ENCODE measurements at regions of chr6 and their contacts with region 1.

Region 1: GRCh38 chr6:53263917-53264316 is 84.8 kb downstream of the ELOVL5 start:
- DNase-seq: no peak
- ATAC-seq: no peak
- H3K4me3 Mint-ChIP-seq: no peak overlapping the region
- H3K27ac Mint-ChIP-seq: peak overlapping the region; percentile 67
- H3K4me1 Mint-ChIP-seq: peaks cover 57% of the 10 kb centered on the region
- H3K27me3 Mint-ChIP-seq: no peaks in the 10 kb centered on the region
- CTCF ChIP-seq: no peak

Region 2: GRCh38 chr6:52893803-52894649 is 369.9 kb before region 1 on chr6:
- CTCF ChIA-PET with region 1: no interaction called
- POLR2A ChIA-PET with region 1: no interaction called
- intact Hi-C with region 1: no loop called
- DNase-seq: no peak
- ATAC-seq: no peak
- H3K4me3 Mint-ChIP-seq: no peak overlapping the region
- H3K27ac Mint-ChIP-seq: no peak overlapping the region
- H3K4me1 Mint-ChIP-seq: no peaks in the 10 kb centered on the region
- H3K27me3 Mint-ChIP-seq: peaks cover 6% of the 10 kb centered on the region
- CTCF ChIP-seq: no peak

Region 3: DNA sequence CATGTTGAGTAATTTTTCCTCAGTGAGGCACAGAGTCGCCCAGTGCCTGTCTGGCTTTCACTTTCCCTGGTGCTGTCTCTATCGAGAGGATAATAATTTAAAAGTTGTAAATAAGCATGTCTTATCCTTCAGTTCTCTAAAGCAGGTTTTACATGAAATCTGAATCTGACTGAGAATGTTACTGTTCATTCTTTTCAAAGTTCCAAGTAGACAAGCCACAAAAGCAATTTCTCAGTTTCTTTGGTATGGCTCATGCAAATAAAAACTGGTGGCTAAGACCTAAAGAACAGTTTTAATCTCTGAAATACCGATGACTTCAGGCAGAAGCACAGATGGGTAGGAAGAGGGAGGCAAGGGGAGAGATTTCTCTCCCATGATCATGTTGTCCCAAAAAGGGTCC is 27.7 kb before region 1 on chr6:
- CTCF ChIA-PET with region 1: no interaction called
- POLR2A ChIA-PET with region 1: no interaction called
- intact Hi-C with region 1: no loop called
- DNase-seq: no peak
- ATAC-seq: no peak
- H3K4me3 Mint-ChIP-seq: peak overlapping the region; percentile 56
- H3K27ac Mint-ChIP-seq: peak overlapping the region; percentile 87
- H3K4me1 Mint-ChIP-seq: peaks cover 86% of the 10 kb centered on the region
- H3K27me3 Mint-ChIP-seq: no peaks in the 10 kb centered on the region
- CTCF ChIP-seq: no peak

Region 4: DNA sequence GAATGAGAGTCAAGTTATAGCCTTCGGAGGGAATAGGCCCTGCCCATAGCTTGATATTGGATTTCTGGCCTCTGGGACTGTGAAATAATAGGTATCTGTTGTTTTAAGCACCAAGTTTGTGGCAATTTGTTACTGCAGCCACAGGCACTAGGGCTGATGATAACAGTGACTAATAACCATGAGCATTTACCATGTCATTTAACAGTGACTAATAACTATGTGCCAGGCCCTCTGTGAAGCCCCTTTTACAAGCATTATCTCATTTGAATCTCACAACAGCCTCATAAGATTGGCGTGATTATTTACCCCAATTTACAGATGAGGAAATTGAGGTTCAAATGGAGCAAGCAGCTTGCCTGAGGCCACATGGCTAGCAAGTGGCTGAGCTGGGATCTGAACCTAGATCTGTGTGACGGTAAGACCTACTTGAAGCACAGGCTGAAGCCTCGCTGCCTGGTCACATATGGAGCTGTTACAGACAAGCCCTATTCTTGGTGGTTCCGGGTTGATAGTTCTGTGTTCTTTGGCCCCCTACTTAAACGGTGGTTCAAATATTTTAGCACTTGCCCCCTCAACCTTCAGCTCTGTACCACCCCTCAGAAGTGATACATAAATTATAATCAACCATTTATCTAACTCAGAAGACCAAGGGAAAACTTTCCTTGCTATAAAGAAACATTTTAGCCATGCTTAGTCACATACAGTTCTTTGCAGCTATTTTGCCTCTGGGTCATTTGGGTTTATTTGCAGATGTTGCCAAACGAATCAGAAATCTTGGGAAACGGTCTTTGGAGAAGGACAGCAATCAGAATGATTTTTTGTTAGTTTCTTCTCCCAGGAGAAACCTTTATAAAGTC is 13.5 kb before region 1 on chr6:
- CTCF ChIA-PET with region 1: interaction called, 4 read pairs
- POLR2A ChIA-PET with region 1: no interaction called
- intact Hi-C with region 1: loop called (anchors 2 kb)
- DNase-seq: no peak
- ATAC-seq: peak; percentile 77
- H3K4me3 Mint-ChIP-seq: peak overlapping the region; percentile 17
- H3K27ac Mint-ChIP-seq: peak overlapping the region; percentile 88
- H3K4me1 Mint-ChIP-seq: peaks cover 82% of the 10 kb centered on the region
- H3K27me3 Mint-ChIP-seq: no peaks in the 10 kb centered on the region
- CTCF ChIP-seq: no peak

Region 5: DNA sequence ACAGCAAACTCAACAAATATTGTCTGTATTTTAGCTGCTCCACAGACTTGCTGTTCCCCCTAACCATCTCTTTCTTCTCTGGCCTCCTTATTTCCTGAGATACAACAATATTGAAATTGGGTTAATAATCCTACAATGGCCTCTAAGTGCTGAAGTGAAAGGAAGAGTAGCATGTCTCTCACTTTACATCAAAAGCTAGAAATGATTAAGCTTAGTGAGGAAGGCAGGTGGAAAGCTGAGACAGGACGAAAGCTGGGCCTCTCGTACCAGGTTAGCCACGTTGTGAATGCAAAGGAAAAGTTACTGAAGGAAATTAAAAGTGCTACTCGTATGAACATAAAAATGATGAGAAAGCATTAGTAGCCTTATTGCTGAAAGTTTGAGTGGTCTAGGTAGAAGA is 21.0 kb after region 1 on chr6:
- CTCF ChIA-PET with region 1: no interaction called
- POLR2A ChIA-PET with region 1: no interaction called
- intact Hi-C with region 1: loop called (anchors 2 kb)
- DNase-seq: no peak
- ATAC-seq: no peak
- H3K4me3 Mint-ChIP-seq: no peak overlapping the region
- H3K27ac Mint-ChIP-seq: peak overlapping the region; percentile 77
- H3K4me1 Mint-ChIP-seq: peaks cover 87% of the 10 kb centered on the region
- H3K27me3 Mint-ChIP-seq: no peaks in the 10 kb centered on the region
- CTCF ChIP-seq: no peak

Measured in activated B cell treated with CpG ODN at 0.5 μM for 24 hours (primary cell).